Activated CD8-positive, alpha-beta T cell treated with anti-CD3 and anti-CD28 coated beads for 36 hours (primary cell): ENCODE measurements at regions of chr16 and their contacts with region 1.

Region 1: DNA sequence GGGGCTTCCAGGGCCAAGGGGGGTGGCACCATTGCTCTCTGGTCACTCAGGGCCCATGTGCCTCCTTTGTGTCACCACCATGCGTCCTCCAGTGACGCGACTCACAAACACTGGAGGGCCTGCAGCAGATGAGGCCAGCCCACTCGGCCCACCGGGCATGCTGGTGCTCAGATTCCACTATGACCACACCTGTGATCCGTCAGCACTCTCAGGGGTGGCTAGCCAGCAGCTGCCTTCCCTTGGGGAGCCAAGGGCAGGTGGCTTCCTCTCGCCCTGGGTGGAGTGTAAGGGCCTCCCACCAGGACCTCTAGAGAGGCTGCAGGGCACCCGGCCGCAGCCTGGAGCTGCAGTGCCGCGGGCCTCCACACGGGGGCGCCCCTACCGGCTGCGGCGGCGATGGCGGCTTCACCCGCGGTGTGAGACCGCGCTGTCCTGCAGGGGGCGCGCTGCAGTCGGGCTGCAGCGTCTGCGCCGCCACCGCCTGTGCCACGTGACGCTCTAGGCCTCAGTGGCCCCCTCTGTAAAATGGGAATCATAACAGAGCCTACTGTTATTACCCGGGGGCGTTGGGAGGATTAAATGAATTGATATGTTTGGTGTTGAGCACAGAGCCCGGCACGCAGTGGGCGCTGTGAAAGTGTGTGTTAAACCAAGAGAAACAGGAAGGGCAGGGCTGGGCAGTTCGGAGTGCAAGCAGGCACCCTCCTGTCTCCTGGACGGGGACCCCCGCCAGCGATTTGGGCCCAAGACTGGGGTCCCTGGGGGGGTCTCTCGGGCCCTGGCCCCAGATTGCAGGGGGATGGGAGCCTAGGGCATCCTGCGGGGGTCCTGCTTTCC is 192.4 kb upstream of the GSE1 start:
- DNase-seq: peak; percentile 79
- ATAC-seq: peak; percentile 90
- H3K4me3 Mint-ChIP-seq: no peak overlapping the region
- H3K27ac Mint-ChIP-seq: no peak overlapping the region
- H3K4me1 Mint-ChIP-seq: peaks cover 9% of the 10 kb centered on the region
- H3K27me3 Mint-ChIP-seq: no peaks in the 10 kb centered on the region
- CTCF ChIP-seq: peak; percentile 100

Region 2: DNA sequence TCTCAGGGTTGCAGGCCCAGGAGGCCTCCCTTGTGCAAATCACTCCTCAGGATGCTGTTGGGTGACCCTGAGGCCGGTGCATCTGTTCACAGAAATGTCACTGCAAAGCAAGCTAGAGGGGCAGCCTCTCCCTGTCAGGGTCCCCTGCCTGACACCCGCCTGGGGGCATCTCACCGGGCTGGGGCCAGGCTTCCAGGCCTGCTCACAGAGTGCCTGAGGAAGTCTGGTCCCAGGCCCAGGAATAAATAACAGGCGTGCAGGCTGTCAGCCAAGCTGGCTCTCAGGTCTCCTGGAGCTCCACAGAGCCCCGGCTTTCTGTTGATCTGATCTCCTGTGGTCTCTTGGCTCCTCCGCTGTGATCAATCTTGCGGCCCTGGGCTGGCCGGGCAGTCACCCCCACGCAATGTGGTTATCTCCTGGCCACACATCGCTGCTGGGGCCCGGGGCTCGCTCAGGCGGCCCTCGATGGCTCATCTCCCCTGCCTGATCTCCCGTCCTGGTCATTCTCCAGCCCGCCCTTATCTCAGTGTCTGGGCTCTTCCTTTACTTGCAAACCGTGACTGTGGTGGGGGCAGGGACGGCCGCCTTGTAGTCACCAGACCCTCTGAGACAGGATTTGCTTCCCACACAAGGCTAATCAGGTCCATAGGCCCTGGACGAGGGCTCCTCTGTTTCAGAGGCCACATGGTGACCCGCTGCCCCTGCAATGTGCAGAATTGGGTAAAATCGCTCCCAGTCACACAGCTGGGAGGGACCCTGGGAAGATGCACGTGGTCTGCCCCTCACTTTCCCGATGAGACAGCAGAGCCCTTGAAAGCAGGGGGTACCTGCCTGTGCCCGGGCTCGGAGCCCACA is 38.8 kb before region 1 on chr16:
- CTCF ChIA-PET with region 1: no interaction called
- POLR2A ChIA-PET with region 1: no interaction called
- intact Hi-C with region 1: no loop called
- DNase-seq: no peak
- ATAC-seq: no peak
- H3K4me3 Mint-ChIP-seq: no peak overlapping the region
- H3K27ac Mint-ChIP-seq: no peak overlapping the region
- H3K4me1 Mint-ChIP-seq: no peaks in the 10 kb centered on the region
- H3K27me3 Mint-ChIP-seq: peaks cover 6% of the 10 kb centered on the region
- CTCF ChIP-seq: no peak

Region 3: DNA sequence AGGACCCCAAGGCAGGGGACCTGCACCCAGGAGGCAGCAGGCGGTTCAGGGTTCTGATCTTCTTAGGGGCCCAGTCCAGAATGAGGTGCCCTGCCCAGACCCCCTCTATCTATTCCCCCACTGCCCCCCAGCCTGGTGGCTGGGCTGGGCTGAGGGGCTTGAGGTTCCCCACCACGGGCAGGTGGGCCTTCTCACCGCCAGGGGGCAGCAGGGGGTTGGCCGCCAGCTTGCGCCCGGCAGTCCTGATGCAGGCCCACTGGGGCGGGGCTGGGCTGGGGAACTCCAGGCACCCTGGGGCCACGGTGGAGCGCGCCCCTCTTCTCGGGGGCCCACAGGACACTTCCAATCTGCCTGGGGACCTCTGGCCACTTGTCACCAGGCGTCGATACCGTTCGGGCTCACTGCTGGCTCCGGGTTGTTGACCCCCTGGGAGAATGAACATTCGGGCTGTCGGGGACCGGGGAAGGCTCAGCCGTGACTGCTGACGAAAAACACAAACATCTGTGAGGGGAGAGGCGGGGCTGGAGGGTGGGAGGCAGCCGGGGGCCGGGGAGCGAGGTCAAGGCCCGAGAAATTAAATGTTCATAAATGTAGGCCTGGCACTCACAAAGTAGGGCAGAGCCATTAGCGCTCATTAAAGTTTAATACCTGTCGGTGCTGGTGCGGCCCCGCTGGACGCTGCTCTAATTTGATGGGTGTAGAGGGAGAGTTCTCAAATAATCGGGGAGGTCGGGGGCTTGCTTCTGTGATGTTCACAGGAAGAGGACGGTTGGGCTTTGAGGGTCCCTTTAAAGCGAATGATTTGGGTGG is 26.8 kb before region 1 on chr16:
- CTCF ChIA-PET with region 1: interaction called, 17 read pairs
- POLR2A ChIA-PET with region 1: no interaction called
- intact Hi-C with region 1: no loop called
- DNase-seq: peak; percentile 77
- ATAC-seq: peak; percentile 88
- H3K4me3 Mint-ChIP-seq: no peak overlapping the region
- H3K27ac Mint-ChIP-seq: no peak overlapping the region
- H3K4me1 Mint-ChIP-seq: no peaks in the 10 kb centered on the region
- H3K27me3 Mint-ChIP-seq: peaks cover 2% of the 10 kb centered on the region
- CTCF ChIP-seq: peak; percentile 91

Region 4: DNA sequence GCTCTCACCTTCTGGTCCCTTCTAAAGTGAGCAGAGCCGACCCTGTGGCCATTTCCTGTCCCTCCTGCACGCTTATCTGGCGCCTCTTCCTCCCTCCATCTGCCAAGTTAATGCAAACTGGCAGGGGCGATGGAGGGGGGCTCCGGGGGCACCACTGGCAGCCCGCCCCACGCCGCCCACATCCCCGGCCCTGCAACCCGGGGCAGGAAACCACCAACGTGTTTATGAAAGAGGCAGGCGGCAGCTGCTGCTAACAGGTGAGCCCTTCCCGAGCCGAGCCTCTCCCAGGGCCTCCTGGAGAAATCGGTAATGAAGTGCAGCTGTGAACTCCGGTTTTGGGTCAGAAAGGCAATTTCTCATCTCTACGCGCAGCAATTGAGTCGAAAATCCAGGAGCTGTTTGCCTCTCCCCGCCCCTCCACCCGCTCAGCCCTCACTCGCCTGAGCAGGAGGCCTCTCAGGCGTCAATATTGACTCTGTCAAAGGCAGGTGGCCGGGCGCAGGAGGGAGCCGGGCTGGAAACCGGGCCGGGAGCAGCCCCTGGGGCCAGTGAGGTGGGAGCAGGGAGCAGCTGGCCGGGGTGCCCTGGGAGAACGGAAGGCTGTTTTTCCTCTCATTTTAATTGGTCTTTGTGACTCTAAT is 28.0 kb after region 1 on chr16:
- CTCF ChIA-PET with region 1: interaction called, 33 read pairs
- POLR2A ChIA-PET with region 1: interaction called, 3 read pairs
- intact Hi-C with region 1: no loop called
- DNase-seq: peak; percentile 57
- ATAC-seq: peak; percentile 47
- H3K4me3 Mint-ChIP-seq: no peak overlapping the region
- H3K27ac Mint-ChIP-seq: no peak overlapping the region
- H3K4me1 Mint-ChIP-seq: peaks cover 50% of the 10 kb centered on the region
- H3K27me3 Mint-ChIP-seq: no peaks in the 10 kb centered on the region
- CTCF ChIP-seq: no peak

Region 5: DNA sequence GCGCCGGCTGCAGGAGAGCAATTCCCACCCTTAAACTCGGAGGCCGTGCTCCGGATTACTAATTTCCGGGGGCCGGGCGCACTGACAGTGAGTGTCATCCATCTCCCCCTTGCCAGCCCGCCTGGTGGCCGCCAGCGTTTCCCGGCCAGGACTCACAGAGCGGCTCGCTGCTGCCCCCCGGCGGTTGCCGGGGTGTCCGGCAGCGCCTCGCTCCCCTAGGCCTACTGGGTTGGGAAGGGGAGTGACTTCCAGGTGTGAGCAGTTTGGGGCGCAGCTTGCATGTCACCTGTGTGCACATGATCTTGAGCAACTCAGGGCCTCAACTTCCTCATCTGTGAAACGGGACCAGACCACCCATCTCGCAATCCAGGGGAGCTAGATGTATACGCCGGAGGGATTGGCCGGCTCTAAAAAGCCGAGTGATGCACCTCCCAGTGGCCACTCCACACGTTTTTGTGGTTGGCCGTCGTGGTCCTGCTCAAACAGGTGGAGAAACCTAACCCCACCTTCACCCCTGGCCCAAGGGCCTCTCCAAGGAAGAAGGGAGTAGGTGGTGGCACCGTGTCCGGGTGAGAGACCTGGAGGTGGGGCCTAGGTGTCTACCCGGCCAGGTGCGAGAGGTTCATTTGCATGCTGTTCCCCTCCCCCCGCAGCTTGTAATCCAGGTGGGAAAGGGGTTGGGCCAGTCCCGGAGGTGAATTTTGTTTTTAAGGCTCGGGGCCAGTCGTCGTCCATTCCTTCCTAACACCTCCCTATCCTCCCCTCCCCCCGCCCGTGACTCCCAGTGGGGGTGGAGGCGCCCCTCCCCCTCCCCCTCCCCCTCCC is 190.0 kb after region 1 on chr16:
- CTCF ChIA-PET with region 1: interaction called, 95 read pairs
- POLR2A ChIA-PET with region 1: interaction called, 4 read pairs
- intact Hi-C with region 1: loop called (anchors 5 kb)
- DNase-seq: peak; percentile 94
- ATAC-seq: peak; percentile 67
- H3K4me3 Mint-ChIP-seq: peak overlapping the region; percentile 63
- H3K27ac Mint-ChIP-seq: peak overlapping the region; percentile 72
- H3K4me1 Mint-ChIP-seq: peaks cover 48% of the 10 kb centered on the region
- H3K27me3 Mint-ChIP-seq: no peaks in the 10 kb centered on the region
- CTCF ChIP-seq: peak; percentile 98

Region 6: GRCh38 chr16:85626191-85626981 is 205.7 kb after region 1 on chr16:
- CTCF ChIA-PET with region 1: interaction called, 14 read pairs
- POLR2A ChIA-PET with region 1: interaction called, 4 read pairs
- intact Hi-C with region 1: no loop called
- DNase-seq: no peak
- ATAC-seq: no peak
- H3K4me3 Mint-ChIP-seq: no peak overlapping the region
- H3K27ac Mint-ChIP-seq: no peak overlapping the region
- H3K4me1 Mint-ChIP-seq: peaks cover 36% of the 10 kb centered on the region
- H3K27me3 Mint-ChIP-seq: no peaks in the 10 kb centered on the region
- CTCF ChIP-seq: no peak

Region 7: DNA sequence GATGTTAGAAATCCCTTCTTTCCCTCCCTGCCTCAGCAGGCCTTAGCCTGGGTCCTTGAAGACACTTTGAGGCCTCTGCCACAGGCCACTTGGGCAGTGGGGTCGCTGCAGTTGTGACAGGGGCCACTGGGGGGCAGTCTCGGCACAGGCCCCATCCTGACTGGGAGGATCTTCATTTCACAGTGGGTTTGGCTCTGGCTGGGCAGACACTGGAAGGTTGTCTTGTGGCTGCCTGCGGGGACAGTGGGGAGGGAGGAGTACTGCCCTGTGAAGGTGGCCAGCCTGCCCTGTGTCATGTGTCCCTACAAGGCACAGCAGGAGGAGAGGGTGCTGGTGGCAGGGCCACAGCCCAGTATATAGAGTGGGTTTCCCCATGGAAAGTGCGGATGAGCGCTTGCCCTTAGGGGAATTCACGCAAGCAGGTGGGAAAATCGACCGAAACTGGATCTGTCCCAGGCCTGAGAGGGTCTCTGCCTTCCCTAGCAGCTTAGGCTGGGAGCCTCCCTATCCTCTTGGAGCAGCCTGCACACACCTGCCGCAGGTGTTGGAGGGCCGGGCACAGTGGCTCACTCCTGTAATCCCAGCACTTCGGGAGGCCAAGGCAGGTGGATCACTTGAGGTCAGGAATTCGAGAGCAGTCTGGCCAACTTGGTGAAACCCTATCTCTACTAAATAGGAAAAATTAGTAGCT is 239.2 kb after region 1 on chr16:
- CTCF ChIA-PET with region 1: interaction called, 10 read pairs
- POLR2A ChIA-PET with region 1: no interaction called
- intact Hi-C with region 1: no loop called
- DNase-seq: peak; percentile 83
- ATAC-seq: peak; percentile 97
- H3K4me3 Mint-ChIP-seq: no peak overlapping the region
- H3K27ac Mint-ChIP-seq: no peak overlapping the region
- H3K4me1 Mint-ChIP-seq: no peaks in the 10 kb centered on the region
- H3K27me3 Mint-ChIP-seq: no peaks in the 10 kb centered on the region
- CTCF ChIP-seq: peak; percentile 82